ENCODE measurements at regions of chr12 and their contacts with region 1.

Region 1: GRCh38 chr12:46430340-46430948 is 57.9 kb upstream of the SLC38A2 start:
- DNase-seq: peak; percentile 6
- H3K4me3 Mint-ChIP-seq: peak overlapping the region; percentile 69
- H3K27ac Mint-ChIP-seq: peak overlapping the region; percentile 72
- H3K4me1 Mint-ChIP-seq: peaks cover 38% of the 10 kb centered on the region
- H3K27me3 Mint-ChIP-seq: no peaks in the 10 kb centered on the region

Region 2: GRCh38 chr12:46450279-46450748 is 19.9 kb after region 1 on chr12:
- intact Hi-C with region 1: loop called (anchors 2 kb)
- DNase-seq: no peak
- H3K4me3 Mint-ChIP-seq: no peak overlapping the region
- H3K27ac Mint-ChIP-seq: no peak overlapping the region
- H3K4me1 Mint-ChIP-seq: peaks cover 53% of the 10 kb centered on the region
- H3K27me3 Mint-ChIP-seq: no peaks in the 10 kb centered on the region

Region 3: GRCh38 chr12:46686267-46686942 is 256.0 kb after region 1 on chr12:
- intact Hi-C with region 1: no loop called
- DNase-seq: no peak
- H3K4me3 Mint-ChIP-seq: no peak overlapping the region
- H3K27ac Mint-ChIP-seq: no peak overlapping the region
- H3K4me1 Mint-ChIP-seq: no peaks in the 10 kb centered on the region
- H3K27me3 Mint-ChIP-seq: peaks cover 2% of the 10 kb centered on the region